ENCODE measurements at regions of chr13 and their contacts with region 1.

Region 1: GRCh38 chr13:26985285-26985878 is 186.2 kb downstream of the USP12 start:
- H3K4me3 ChIP-seq: no peak overlapping the region
- H3K27ac ChIP-seq: no peak overlapping the region
- H3K4me1 ChIP-seq: peaks cover 9% of the 10 kb centered on the region
- CTCF ChIP-seq: peak; percentile 60

Region 2: GRCh38 chr13:26771796-26772195 is 213.6 kb before region 1 on chr13:
- CTCF ChIA-PET with region 1: no interaction called
- POLR2A ChIA-PET with region 1: no interaction called
- H3K4me3 ChIP-seq: no peak overlapping the region
- H3K27ac ChIP-seq: no peak overlapping the region
- H3K4me1 ChIP-seq: no peaks in the 10 kb centered on the region
- CTCF ChIP-seq: no peak

Region 3: DNA sequence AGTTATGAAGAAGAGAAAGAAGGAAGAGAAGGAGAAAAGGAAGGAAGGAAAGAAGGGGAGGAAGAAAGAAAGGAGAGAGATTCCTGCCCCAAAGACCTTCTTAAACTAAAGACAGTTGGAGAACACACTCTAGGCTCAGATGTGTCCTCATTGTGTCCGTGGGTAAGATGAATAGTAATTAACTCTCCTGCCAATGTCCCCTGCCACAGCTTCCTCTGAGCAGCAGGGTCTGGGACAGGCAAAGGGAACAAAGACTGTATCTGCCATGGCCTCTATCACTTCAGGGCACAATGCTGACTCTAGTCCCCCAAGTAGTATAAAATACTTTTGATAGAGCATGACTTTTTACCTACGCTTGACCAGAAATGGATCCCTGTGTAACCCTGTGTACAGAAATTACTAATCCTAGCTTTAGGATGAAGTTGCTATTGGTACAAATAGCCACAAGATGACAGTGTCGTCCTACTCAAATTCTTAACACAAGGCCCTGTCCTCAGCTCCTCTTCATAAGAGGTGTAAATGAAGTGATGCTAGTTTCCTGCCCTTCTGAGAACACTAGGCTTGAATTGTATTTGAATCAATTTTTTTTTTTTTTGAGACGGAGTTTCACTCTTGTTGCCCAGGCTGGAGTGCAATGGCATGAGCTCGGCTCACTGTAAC is 38.6 kb before region 1 on chr13:
- CTCF ChIA-PET with region 1: interaction called, 68 read pairs
- POLR2A ChIA-PET with region 1: interaction called, 6 read pairs
- H3K4me3 ChIP-seq: no peak overlapping the region
- H3K27ac ChIP-seq: no peak overlapping the region
- H3K4me1 ChIP-seq: peaks cover 7% of the 10 kb centered on the region; the same call in 1 of the 2 replicates
- CTCF ChIP-seq: peak; percentile 80

Measured in HEK293 (cell line).